Natural killer cell (primary cell): ENCODE measurements at regions of chr10 and their contacts with region 1.

Region 1: DNA sequence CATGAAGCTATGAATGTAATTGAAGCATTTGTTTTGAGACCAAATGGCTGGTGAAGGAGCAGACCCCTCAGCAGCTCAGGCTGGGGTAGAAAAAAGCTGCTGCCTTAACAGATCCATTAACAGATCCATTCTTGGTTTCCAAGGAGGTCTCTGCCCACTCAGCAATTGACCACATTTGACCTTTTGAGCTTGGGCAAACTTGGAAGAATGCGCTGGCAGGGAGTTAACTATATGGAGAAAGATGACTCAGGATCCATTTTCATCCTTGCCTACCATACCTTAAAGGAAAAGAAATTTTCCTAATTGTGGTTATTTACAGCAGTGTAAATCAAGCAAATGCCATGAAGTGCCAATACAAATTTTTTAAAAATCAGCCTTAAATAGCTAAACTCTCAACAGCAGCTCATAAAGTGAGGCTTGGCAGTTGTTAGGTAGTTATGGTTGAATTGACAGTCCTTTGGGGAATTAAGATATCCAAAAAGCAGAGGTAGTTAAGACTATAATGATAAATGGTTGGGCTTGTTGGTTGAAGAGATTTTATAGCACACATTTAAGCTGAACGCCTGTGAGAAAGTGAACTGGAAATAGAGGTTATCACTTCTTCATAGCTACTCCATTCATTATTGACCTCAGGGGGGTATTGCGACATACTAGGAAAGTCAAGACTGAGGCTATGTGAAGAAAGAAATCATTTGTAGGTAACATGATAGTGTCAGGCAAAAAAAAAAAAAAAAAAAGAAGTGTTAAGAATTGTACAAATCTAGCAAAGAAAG is 83.9 kb downstream of the MKX start:
- DNase-seq: no peak
- ATAC-seq: no peak
- H3K4me3 ChIP-seq: no peak overlapping the region
- H3K4me3 Mint-ChIP-seq: no peak overlapping the region
- H3K27ac ChIP-seq: no peak overlapping the region
- H3K27ac Mint-ChIP-seq: no peak overlapping the region
- H3K4me1 ChIP-seq: peaks cover 7% of the 10 kb centered on the region
- H3K4me1 Mint-ChIP-seq: no peaks in the 10 kb centered on the region
- H3K27me3 ChIP-seq: peaks cover 3% of the 10 kb centered on the region
- H3K27me3 Mint-ChIP-seq: peaks cover 29 to 65% of the 10 kb centered on the region in 2 donors
- CTCF ChIP-seq: no peak

Region 2: GRCh38 chr10:27369880-27370279 is 291.8 kb before region 1 on chr10:
- intact Hi-C with region 1: loop called (anchors 10 kb)
- DNase-seq: peak in 1 of 2 donors; percentile 19
- ATAC-seq: no peak
- H3K4me3 ChIP-seq: no peak overlapping the region
- H3K4me3 Mint-ChIP-seq: no peak overlapping the region
- H3K27ac ChIP-seq: no peak overlapping the region
- H3K27ac Mint-ChIP-seq: no peak overlapping the region
- H3K4me1 ChIP-seq: no peaks in the 10 kb centered on the region
- H3K4me1 Mint-ChIP-seq: no peaks in the 10 kb centered on the region
- H3K27me3 ChIP-seq: no peaks in the 10 kb centered on the region
- H3K27me3 Mint-ChIP-seq: peaks cover 9 to 21% of the 10 kb centered on the region in 2 donors
- CTCF ChIP-seq: no peak

Region 3: DNA sequence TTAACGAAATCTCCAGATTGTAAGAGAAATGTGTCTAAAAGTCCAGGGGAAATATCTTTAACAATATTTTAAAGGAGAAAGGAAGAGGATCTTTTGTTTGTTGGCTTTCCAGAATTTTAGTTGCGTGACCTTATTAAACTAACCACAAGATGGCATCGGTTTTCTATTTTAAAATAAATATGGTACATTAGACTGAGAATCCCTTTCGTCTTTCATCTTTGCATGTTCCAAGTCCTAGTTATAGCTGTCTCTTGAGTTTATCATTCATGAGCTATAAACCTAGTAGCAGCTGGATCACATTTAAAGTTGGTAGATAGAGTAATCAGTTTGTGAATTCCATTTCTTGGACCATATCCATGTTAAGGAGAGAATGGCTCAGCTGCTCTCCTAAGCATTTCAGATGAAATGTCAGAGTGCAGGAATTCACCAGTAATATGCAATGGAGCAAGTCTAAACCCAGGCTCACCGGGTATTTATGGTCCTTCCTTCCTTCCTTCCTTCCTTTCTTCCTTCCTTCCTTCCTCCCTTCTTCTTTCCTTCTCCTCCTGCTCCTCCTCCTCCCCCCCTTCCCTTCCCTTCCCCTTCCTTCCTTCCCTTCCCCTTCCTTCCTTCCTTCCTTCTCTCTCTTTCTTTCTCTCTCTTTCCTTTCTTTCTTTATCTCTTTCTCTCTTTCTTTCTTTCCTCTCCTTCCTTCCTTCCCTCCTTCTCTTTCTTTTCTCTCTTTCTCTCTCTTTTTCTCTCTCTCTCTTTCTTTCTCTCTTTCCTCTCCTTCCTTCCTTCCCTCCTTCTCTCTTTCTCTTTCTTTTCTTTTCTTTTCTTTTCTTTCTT is 215.4 kb before region 1 on chr10:
- intact Hi-C with region 1: loop called (anchors 1 kb)
- DNase-seq: peak in 1 of 2 donors; percentile 61
- ATAC-seq: peak in 1 of 3 donors; percentile 55
- H3K4me3 ChIP-seq: no peak overlapping the region
- H3K4me3 Mint-ChIP-seq: no peak overlapping the region
- H3K27ac ChIP-seq: no peak overlapping the region
- H3K27ac Mint-ChIP-seq: no peak overlapping the region
- H3K4me1 ChIP-seq: peaks cover 4% of the 10 kb centered on the region
- H3K4me1 Mint-ChIP-seq: peaks cover 0 to 6% of the 10 kb centered on the region in 2 donors
- H3K27me3 ChIP-seq: no peaks in the 10 kb centered on the region
- H3K27me3 Mint-ChIP-seq: no peaks in the 10 kb centered on the region
- CTCF ChIP-seq: no peak

Region 4: DNA sequence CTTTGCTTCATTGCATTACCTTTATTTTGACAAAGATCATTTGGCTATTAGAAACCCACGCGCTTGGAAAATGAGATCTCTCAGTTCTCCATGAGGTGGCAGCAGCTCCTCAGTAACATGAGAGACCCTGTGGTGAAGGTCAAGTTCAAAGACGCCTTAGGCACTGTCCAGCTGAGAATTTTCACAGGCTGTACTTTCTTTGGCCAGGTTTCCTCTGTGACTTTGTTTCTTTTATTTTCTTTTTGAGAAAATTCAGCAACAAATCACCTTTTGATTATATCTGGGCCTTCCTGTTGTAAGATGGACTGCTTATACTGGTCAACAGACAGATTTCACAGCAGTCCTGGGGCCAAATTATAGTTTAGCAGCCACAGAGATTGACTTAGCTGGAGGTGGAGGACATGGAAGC is 103.1 kb before region 1 on chr10:
- intact Hi-C with region 1: loop called (anchors 1 kb)
- DNase-seq: peak in 1 of 2 donors; percentile 65
- ATAC-seq: peak in 2 of 3 donors; percentile 70 to 74
- H3K4me3 ChIP-seq: no peak overlapping the region
- H3K4me3 Mint-ChIP-seq: no peak overlapping the region
- H3K27ac ChIP-seq: no peak overlapping the region
- H3K27ac Mint-ChIP-seq: no peak overlapping the region
- H3K4me1 ChIP-seq: no peaks in the 10 kb centered on the region
- H3K4me1 Mint-ChIP-seq: peaks cover 0 to 7% of the 10 kb centered on the region in 2 donors
- H3K27me3 ChIP-seq: no peaks in the 10 kb centered on the region
- H3K27me3 Mint-ChIP-seq: no peaks in the 10 kb centered on the region
- CTCF ChIP-seq: peak; percentile 72